Activated CD4-positive, alpha-beta memory T cell treated with anti-CD3 and anti-CD28 coated beads for 36 hours (primary cell): ENCODE measurements at regions of chr7 and their contacts with region 1.

Region 1: DNA sequence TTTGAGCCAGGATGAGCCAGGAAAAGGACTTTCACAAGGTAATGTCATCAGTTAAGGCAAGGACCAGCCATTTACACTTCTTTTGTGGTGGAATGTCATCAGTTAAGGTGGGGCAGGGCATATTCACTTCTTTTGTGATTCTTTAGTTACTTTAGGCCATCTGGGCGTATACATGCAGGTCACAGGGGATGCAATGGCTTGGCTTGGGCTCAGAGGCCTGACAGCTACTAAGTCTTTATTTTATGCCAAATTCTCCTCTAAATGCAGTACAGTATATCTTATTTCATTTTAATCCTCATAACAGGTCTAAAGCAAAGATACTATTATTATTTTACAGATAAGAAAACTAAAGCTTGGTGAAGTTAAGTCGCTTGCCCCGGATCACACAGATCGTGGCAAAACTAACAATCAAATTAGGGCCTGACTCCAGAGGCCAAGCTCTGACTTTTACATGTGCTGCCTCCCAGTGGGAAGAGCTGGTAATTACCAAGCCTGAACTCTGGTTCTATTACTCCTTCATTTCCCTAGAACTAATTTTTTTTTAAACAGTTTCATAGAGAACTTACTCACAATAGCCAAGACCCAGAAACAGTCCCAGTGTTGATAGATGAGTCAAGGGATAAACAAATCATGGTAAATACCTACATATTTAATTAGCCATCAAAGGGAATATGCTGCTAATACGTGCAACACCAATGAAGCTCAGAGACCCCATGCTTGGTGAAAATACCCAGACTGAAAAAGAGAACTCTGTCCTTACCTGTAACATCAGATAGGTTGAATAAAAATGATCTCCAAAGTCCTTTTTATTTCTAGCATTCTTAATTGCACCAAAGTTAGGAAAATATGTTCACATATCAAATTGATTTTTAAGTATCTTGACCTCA is 35.4 kb downstream of the C7orf25 start:
- DNase-seq: peak; percentile 73
- H3K4me3 Mint-ChIP-seq: no peak overlapping the region
- H3K27ac Mint-ChIP-seq: no peak overlapping the region
- H3K4me1 Mint-ChIP-seq: no peaks in the 10 kb centered on the region
- H3K27me3 Mint-ChIP-seq: peaks cover 3% of the 10 kb centered on the region

Region 2: GRCh38 chr7:41977151-41977651 is 899.2 kb before region 1 on chr7:
- CTCF ChIA-PET with region 1: interaction called, 13 read pairs
- POLR2A ChIA-PET with region 1: no interaction called
- intact Hi-C with region 1: no loop called
- DNase-seq: no peak
- H3K4me3 Mint-ChIP-seq: no peak overlapping the region
- H3K27ac Mint-ChIP-seq: no peak overlapping the region
- H3K4me1 Mint-ChIP-seq: no peaks in the 10 kb centered on the region
- H3K27me3 Mint-ChIP-seq: peaks cover 9% of the 10 kb centered on the region

Region 3: DNA sequence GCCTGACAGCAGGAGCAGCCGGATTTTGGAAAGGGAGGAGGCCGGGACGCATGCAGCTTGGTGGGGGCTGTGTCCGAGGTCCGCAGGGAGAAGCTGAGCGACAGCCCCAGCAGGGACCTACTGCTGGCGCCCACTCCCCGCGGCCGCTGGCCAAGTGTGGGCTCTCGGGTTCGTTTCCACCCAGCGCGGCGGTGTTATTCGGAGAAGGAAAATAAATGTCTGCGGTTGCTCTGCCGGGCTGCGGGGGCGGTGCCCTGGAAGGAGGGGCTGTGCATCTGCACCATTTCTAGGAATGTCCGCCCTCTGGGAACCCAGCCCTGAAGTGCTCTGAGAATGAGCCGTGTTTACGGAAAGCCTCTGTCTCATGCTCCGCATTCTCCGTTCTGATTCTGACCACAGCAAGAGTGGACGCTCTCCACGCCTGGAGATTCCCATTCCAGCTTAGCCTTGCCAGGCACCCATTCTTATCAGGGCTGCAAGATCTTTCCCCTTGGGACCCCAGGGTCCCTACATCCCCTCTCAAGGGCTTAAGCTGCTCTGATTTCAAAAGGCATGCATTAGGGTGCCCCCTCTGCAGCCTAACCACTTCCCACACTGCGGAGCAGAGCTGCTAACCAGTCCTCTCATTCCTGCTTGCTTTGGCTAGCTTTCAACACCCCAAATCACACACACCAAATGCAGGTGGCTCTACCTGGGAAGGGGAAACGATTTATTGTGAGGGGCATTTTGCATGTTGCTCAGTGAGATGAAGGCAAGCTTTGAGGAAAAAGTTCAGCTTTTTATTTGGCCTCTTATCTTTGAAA is 382.8 kb before region 1 on chr7:
- CTCF ChIA-PET with region 1: no interaction called
- POLR2A ChIA-PET with region 1: no interaction called
- intact Hi-C with region 1: loop called (anchors 10 kb)
- DNase-seq: peak; percentile 14
- H3K4me3 Mint-ChIP-seq: no peak overlapping the region
- H3K27ac Mint-ChIP-seq: no peak overlapping the region
- H3K4me1 Mint-ChIP-seq: no peaks in the 10 kb centered on the region
- H3K27me3 Mint-ChIP-seq: peaks cover 2% of the 10 kb centered on the region

Region 4: GRCh38 chr7:42548816-42549611 is 327.4 kb before region 1 on chr7:
- CTCF ChIA-PET with region 1: no interaction called
- POLR2A ChIA-PET with region 1: no interaction called
- intact Hi-C with region 1: no loop called
- DNase-seq: no peak
- H3K4me3 Mint-ChIP-seq: no peak overlapping the region
- H3K27ac Mint-ChIP-seq: no peak overlapping the region
- H3K4me1 Mint-ChIP-seq: no peaks in the 10 kb centered on the region
- H3K27me3 Mint-ChIP-seq: no peaks in the 10 kb centered on the region

Region 5: GRCh38 chr7:42745357-42746059 is 130.9 kb before region 1 on chr7:
- CTCF ChIA-PET with region 1: interaction called, 14 read pairs
- POLR2A ChIA-PET with region 1: no interaction called
- intact Hi-C with region 1: no loop called
- DNase-seq: peak; percentile 43
- H3K4me3 Mint-ChIP-seq: no peak overlapping the region
- H3K27ac Mint-ChIP-seq: no peak overlapping the region
- H3K4me1 Mint-ChIP-seq: no peaks in the 10 kb centered on the region
- H3K27me3 Mint-ChIP-seq: no peaks in the 10 kb centered on the region